ENCODE measurements at regions of chr12 and their contacts with region 1.

Region 1: DNA sequence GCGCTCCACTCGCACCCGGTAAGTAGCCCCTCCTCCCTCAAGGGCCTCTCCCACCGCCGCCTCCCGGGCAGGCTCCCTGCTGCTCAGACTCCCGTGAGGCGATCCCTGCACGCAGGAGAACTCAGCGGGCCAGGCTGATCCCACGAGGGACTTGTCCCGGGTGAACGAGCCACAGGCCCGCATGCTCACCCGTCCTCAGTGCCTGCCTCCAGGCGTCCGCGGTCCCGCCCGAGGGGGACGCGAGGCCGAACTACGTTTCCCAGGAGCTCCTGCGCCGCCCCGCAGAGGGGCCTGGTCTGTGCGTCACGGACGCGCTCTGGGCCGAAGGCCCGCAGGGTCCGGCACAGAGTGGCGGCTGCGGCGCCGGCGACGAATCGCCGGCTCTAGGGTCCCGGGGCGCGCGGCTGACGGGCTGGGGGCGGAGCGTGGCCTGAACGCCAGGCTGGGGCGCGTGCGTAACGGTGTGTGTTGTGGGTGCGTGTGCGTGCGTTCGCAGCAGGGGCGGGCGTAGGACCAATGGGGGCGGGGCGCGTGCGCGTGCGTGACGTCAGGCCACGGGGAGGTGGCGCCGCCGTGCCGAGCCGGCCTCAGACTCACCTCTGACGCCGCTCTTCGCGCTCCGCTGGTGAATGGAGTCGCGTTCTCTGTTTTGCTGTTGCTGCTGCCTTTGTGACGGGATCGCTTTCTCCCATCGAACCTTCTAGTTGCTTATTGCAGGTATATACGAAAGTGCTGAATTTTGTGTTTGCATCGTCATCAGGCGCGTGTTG is at the starts of genes ZNF10 and ZNF891:
- DNase-seq: peak; percentile 97 to 99 (median 98)
- H3K4me3 ChIP-seq: peak within 1 kb of the TSS; percentile 82 to 96 (median 91)
- H3K27ac ChIP-seq: peak within 1 kb of the TSS; percentile 93 to 96
- H3K4me1 ChIP-seq: peaks cover 0 to 9% (median 4%) of the 10 kb centered on the region in 4 experiments
- H3K27me3 ChIP-seq: no peaks in the 10 kb centered on the region

Region 2: GRCh38 chr12:133080368-133081158 is 49.7 kb before region 1 on chr12 and contains the start of gene ZNF140:
- CTCF ChIA-PET with region 1: interaction called, 3 read pairs
- POLR2A ChIA-PET with region 1: interaction called, 11 read pairs
- DNase-seq: peak; percentile 99
- H3K4me3 ChIP-seq: peak within 1 kb of the TSS; percentile 49 to 88 (median 82)
- H3K27ac ChIP-seq: peak within 1 kb of the TSS; percentile 98 to 99
- H3K4me1 ChIP-seq: peaks cover 0 to 12% (median 9%) of the 10 kb centered on the region in 4 experiments
- H3K27me3 ChIP-seq: no peaks in the 10 kb centered on the region

Region 3: DNA sequence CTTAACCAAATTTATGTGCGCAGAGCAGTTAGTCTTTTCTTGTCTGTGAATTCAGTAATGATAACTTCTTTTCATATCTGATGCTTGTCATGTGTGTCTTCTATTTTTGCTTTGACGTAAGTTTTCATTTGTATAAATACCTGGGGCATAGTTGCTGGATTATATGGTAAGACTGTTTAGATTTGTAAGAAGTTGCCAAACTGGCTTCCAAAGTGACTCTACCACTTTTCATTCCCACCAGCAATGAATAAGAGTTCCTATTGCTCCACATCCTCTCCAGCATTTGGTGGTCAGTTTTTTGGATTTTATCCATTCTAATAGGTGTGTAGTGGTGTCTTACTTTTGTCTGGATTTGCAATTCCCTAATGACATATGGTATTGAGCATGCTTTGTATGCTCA is 60.0 kb after region 1 on chr12:
- CTCF ChIA-PET with region 1: no interaction called
- POLR2A ChIA-PET with region 1: no interaction called
- DNase-seq: no peak
- H3K4me3 ChIP-seq: peak overlapping the region in 2 of 7 experiments; percentile 10 to 24
- H3K27ac ChIP-seq: no peak overlapping the region
- H3K4me1 ChIP-seq: no peaks in the 10 kb centered on the region
- H3K27me3 ChIP-seq: no peaks in the 10 kb centered on the region